PC-9 (cell line): ENCODE measurements at regions of chr12 and their contacts with region 1.

Region 1: DNA sequence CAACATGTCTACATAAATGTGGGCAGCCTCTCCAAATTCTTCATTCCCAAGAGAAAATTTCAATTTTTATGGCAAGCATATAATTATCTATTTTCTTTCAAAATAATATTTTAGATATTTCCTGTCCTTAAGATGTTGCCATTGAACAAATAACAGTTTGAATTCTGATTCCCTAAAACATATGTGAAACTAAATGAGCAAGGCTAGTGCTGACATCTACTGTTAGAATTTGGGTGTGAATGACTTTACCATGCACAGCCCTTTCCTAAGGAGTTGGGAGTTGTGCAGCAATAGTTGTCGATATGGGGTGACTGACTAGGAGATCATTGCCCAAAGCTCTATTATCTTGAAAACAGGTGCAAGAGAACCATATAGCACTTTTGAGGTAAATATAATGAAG is 108.2 kb upstream of the SLC38A4 start:
- DNase-seq: peak in 1 of 2 experiments; percentile 7
- H3K4me3 ChIP-seq: no peak overlapping the region
- H3K27ac ChIP-seq: no peak overlapping the region
- H3K4me1 ChIP-seq: no peaks in the 10 kb centered on the region; the same call in 1 of the 2 replicates
- H3K27me3 ChIP-seq: no peaks in the 10 kb centered on the region
- CTCF ChIP-seq: peak; percentile 70

Region 2: GRCh38 chr12:46332260-46332659 is 601.7 kb before region 1 on chr12:
- CTCF ChIA-PET with region 1: no interaction called
- POLR2A ChIA-PET with region 1: interaction called, 16 read pairs
- intact Hi-C with region 1: no loop called
- DNase-seq: peak in 1 of 2 experiments; percentile 56
- H3K4me3 ChIP-seq: no peak overlapping the region
- H3K27ac ChIP-seq: no peak overlapping the region
- H3K4me1 ChIP-seq: no peaks in the 10 kb centered on the region
- H3K27me3 ChIP-seq: no peaks in the 10 kb centered on the region
- CTCF ChIP-seq: no peak

Region 3: DNA sequence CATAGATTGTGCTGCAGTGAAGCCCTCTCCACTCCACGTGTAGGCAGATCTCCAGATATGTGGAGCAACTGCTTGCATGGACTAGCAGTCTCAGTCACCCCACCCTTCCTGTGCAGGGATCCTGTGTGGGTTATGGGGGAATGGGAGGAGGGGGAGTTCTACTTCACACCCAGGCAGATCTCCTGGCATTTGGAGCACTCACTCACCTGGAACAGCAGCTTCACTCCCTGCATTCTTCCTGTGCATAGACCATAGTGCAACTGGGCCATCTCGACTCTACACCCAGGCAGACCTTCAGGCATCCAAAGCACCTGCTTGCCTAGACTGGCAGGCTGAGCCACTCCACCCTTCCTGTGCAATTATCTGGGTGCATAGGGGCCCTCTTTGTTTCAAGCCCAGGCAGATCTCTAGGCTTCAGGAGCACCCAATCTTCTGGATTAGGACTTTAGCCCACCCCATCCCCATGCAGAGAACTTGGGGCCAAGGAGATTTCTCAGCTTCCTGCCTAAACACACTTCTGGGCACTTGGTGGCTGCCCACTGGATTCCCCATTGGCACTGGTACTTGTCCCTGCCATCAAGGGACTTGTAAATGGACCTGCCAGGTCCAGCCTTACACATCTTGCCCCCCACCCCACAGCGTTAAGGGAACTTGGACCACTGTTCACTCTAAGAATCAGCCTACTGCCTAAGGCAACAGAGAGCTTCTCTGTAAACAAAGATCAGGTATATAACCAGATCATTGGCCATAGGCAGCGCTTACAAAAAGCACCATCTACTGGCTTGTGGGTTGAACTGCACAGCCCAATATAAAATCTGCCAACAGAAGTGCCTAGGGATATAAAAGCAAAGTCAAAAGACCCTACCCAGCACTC is 49.7 kb after region 1 on chr12:
- CTCF ChIA-PET with region 1: interaction called, 3 read pairs
- POLR2A ChIA-PET with region 1: no interaction called
- intact Hi-C with region 1: loop called (anchors 2 kb)
- DNase-seq: peak; percentile 44 to 62
- H3K4me3 ChIP-seq: no peak overlapping the region
- H3K27ac ChIP-seq: no peak overlapping the region
- H3K4me1 ChIP-seq: peaks cover 14% of the 10 kb centered on the region
- H3K27me3 ChIP-seq: no peaks in the 10 kb centered on the region
- CTCF ChIP-seq: peak; percentile 84